Activated CD4-positive, alpha-beta T cell treated with anti-CD3 and anti-CD28 coated beads, Interleukin-2, amount 10 ng/mL, durations not matched to agents 24 days and 14 days (primary cell): ENCODE measurements at regions of chr1 and their contacts with region 1.

Region 1: GRCh38 chr1:145996433-145997015 is at the start of gene TXNIP:
- DNase-seq: peak; percentile 98
- H3K4me3 Mint-ChIP-seq: peak within 1 kb of the TSS; percentile 93
- H3K27ac Mint-ChIP-seq: peak within 1 kb of the TSS; percentile 98
- H3K4me1 Mint-ChIP-seq: peaks cover 68% of the 10 kb centered on the region
- H3K27me3 Mint-ChIP-seq: no peaks in the 10 kb centered on the region
- total RNA-seq, gene TXNIP: 83.4 and 85.2 TPM in 2 replicates

Region 2: GRCh38 chr1:145823565-145824498 is 172.7 kb before region 1 on chr1 and contains the starts of genes POLR3C and RNF115:
- intact Hi-C with region 1: no loop called
- DNase-seq: peak; percentile 96
- H3K4me3 Mint-ChIP-seq: peak within 1 kb of the TSS; percentile 91
- H3K27ac Mint-ChIP-seq: peak within 1 kb of the TSS; percentile 93
- H3K4me1 Mint-ChIP-seq: peaks cover 40% of the 10 kb centered on the region
- H3K27me3 Mint-ChIP-seq: no peaks in the 10 kb centered on the region
- total RNA-seq, gene POLR3C: 35.0 and 39.0 TPM in 2 replicates
- total RNA-seq, gene RNF115: 14.1 and 15.5 TPM in 2 replicates

Region 3: DNA sequence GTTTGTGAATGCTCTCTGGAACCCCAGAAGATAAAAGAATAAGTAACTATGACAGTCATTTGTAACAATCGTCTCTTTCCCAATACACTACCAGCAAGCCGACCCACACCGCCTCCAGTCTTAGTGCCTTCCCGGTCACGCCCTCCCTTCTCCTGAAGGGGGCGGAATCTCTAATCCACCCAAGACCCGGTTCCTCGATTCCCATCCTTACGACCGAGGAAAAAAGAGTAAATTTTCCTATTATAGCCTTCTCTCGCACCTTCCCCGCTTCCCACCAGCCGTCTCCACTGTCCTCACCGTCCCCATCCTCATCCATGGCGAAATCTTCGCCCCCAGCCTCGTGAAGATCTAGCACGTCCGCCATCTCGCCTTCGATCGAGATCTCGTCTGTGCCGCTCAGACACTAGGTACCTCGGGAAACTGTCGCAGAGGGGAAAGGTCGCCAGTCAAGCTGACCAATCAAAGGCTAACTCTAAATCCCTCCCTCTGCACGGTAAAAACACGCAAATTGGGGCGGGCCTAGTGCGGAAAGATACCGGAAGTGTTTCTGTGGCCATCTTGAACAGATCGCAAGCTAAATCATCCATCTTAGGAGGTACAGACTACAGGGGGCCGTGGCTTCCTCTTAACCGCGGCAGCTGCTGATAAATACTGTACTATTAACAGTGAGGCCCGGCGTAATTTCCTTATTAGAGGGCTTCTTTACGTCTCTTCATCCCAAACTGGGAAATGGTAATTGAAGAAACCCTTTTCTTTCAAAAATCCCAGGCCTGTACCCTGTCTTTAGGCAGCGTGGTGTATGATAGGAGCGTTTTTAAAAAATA is 69.2 kb before region 1 on chr1 and contains the start of gene RBM8A:
- intact Hi-C with region 1: loop called (anchors 1 kb)
- DNase-seq: peak; percentile 98
- H3K4me3 Mint-ChIP-seq: no peak within 1 kb of the TSS
- H3K27ac Mint-ChIP-seq: peak within 1 kb of the TSS; percentile 86
- H3K4me1 Mint-ChIP-seq: peaks cover 15% of the 10 kb centered on the region
- H3K27me3 Mint-ChIP-seq: no peaks in the 10 kb centered on the region
- total RNA-seq, gene RBM8A: 326 and 355 TPM in 2 replicates

Region 4: DNA sequence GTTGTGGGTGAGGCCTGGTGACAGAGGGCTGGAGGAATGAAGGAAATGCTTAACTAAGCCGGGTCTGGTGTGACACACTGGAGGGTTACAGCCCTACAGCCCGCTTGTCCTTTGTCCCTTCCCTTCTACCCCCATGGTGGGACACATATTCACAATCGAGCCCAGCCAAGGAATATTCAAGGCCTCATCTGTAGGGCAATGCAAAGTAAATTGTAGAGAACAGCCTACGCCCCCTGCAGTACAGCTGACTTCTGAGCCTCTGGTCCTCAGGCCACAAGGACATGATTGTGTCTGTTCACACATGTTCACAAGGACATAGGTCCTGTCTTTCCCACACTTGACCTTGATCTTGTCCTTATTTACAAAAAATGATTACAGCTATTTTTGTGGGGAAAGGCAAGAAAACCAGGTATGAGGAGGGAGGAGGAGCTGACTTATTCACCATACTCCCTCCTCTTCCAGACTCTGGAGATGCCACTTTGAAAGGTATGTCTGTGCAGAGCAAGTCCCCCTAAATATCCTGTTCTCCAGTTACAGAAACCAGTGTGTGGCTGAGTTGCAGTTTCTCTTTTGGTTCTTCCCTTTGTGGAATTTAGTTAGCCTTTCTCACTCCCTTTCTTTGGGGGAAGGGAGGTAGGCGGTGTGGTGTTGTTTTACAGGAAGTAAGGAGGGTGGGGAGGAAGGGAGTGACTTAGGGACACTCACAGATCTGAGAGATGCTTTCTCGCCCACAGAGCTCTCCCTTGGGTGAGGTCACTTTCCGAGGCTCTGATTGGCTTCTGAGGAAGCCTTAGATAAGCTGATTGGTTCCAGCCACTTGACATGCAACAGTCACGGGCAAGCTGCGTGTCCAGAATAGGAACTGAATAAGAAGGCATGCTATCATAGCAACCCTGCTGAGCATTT is 17.4 kb before region 1 on chr1:
- intact Hi-C with region 1: loop called (anchors 1 kb)
- DNase-seq: peak; percentile 96
- H3K4me3 Mint-ChIP-seq: no peak overlapping the region
- H3K27ac Mint-ChIP-seq: no peak overlapping the region
- H3K4me1 Mint-ChIP-seq: peaks cover 12% of the 10 kb centered on the region
- H3K27me3 Mint-ChIP-seq: no peaks in the 10 kb centered on the region

Region 5: DNA sequence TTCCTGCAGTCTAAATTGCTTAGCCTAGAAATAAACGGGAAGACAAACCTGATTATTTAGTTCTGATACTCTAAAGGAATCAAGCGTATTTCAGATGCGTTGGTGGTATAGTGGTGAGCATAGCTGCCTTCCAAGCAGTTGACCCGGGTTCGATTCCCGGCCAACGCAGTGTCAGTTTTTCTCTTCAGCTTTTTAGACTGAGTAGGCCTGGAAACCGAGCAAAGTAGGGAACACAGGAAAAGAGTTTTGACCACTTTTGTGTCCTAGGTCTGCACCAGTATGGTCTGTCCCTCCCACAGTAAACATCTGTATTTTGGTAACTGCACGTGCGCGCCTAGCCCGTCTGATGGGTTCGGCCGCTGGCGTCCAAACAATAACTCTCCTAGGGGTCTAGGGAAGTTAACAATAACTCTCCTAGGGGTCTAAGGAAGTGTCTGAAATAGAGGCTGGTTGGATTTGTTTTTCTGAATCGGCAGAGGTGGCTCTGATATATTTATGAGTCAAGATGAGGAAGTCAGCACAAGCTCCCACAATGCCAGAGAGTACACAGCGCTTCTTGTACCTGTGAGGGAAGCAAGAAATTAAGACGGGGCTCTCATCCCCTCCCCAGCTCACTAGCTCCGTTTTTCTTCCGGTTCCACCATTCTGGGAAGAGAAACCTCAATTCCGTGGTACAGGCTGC is 40.6 kb after region 1 on chr1:
- intact Hi-C with region 1: loop called (anchors 1 kb)
- DNase-seq: peak; percentile 93
- H3K4me3 Mint-ChIP-seq: peak overlapping the region; percentile 96
- H3K27ac Mint-ChIP-seq: peak overlapping the region; percentile 97
- H3K4me1 Mint-ChIP-seq: peaks cover 46% of the 10 kb centered on the region
- H3K27me3 Mint-ChIP-seq: peaks cover 16% of the 10 kb centered on the region

Region 6: DNA sequence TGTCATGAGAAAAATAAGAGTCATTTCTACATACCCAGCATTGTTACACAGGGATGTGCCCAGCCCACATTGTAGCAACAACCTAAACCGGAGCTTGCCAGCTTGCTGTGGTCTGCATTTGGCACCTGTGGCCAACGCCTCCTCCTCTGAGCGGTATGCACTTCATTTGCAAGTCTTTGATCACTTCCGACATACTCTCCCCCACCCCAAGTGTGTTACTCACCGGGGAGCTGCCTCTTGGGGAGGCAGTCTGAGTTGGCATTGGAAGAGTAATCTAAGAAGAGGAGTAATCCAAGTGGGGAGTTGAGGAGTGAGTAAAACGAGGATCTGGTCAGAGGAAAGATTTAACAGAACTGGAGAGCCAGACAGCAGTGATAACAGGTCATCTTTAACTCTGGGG is 1548.6 kb after region 1 on chr1:
- intact Hi-C with region 1: loop called (anchors 10 kb)
- DNase-seq: peak; percentile 90
- H3K4me3 Mint-ChIP-seq: peak overlapping the region; percentile 77
- H3K27ac Mint-ChIP-seq: peak overlapping the region; percentile 84
- H3K4me1 Mint-ChIP-seq: peaks cover 51% of the 10 kb centered on the region
- H3K27me3 Mint-ChIP-seq: no peaks in the 10 kb centered on the region